GM10248 (cell line): ENCODE measurements at regions of chr5 and their contacts with region 1.

Region 1: DNA sequence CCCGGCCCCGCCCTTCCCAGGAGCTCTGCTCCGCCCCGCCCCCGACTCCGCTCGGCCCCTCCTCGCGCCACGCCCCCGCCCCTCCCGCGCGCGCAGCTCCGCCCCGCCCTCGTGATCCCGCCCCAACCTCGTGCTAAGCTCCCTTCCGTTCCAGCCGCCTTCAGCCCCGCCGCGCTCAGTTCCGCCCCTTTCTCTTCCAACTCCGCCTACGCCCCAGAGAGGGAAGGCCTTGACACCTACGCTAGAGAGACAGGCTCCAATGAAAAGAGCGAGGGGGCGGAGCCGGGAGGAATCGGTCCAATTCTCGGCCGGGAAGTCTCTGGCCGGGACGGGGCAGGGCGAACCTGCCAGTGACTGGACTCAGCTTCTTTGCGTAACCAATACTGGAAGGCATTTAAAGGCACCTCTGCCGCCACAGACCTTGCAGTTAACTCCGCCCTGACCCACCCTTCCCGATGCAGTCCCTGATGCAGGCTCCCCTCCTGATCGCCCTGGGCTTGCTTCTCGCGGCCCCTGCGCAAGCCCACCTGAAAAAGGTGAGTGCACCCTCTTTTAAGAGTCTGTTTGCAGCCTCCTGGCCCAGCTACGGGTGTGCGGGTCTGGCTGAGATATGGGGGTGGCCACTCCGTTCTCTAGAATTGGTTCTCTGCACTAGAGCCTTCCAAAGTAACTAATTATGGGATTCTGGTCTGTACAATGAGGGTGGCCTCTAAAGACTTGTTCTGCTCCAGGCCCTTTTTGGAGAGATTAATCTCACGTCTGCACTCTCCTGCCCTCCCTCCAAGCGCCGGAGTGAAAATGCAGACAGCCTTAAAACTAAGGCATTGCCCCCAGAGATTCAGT is at the start of gene GM2A:
- DNase-seq: peak; percentile 97
- CTCF ChIP-seq: no peak

Region 2: GRCh38 chr5:151213800-151214613 is 39.0 kb before region 1 on chr5:
- CTCF ChIA-PET with region 1: interaction called, 9 read pairs
- POLR2A ChIA-PET with region 1: interaction called, 53 read pairs
- DNase-seq: peak; percentile 90
- CTCF ChIP-seq: no peak

Region 3: GRCh38 chr5:151223469-151224264 is 29.3 kb before region 1 on chr5 and contains the start of gene CCDC69:
- CTCF ChIA-PET with region 1: interaction called, 21 read pairs
- POLR2A ChIA-PET with region 1: interaction called, 12 read pairs
- DNase-seq: peak; percentile 76
- CTCF ChIP-seq: no peak

Region 4: GRCh38 chr5:151239237-151239861 is 13.6 kb before region 1 on chr5:
- CTCF ChIA-PET with region 1: interaction called, 20 read pairs
- POLR2A ChIA-PET with region 1: interaction called, 24 read pairs
- DNase-seq: peak; percentile 73
- CTCF ChIP-seq: no peak

Region 5: GRCh38 chr5:151270599-151270998 is 17.6 kb after region 1 on chr5:
- CTCF ChIA-PET with region 1: interaction called, 12 read pairs
- POLR2A ChIA-PET with region 1: interaction called, 5 read pairs
- DNase-seq: peak; percentile 64
- CTCF ChIP-seq: no peak

Region 6: DNA sequence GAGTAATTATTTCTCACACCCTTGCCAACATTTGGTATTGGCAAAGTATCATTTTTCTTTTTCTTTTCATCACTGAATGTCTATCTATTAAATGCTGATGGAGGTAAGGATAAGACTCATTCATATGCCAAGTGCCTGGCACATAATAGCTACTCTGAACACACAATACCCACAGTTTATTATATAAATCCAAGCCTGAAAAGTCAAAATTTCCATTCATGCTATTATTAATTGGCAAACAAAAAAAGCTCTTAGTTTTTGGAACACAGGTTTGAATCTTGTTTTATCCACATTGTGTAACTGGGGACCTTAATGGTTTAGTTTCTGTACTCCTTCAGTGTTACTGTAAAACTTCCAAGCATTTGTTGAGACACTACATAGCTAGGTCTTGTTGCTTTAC is 511.8 kb after region 1 on chr5:
- CTCF ChIA-PET with region 1: no interaction called
- POLR2A ChIA-PET with region 1: no interaction called
- DNase-seq: no peak
- CTCF ChIP-seq: no peak